Endothelial cell of umbilical vein (primary cell): ENCODE measurements at regions of chr11 and their contacts with region 1.

Region 1: GRCh38 chr11:68383976-68384501 is 71.6 kb downstream of the LRP5 start:
- DNase-seq: peak; percentile 41
- H3K4me3 ChIP-seq: no peak overlapping the region
- H3K27ac ChIP-seq: no peak overlapping the region
- H3K4me1 ChIP-seq: peaks cover 33% of the 10 kb centered on the region
- H3K27me3 ChIP-seq: no peaks in the 10 kb centered on the region
- CTCF ChIP-seq: peak; percentile 90 to 93
- POLR2A ChIP-seq: no peak

Region 2: GRCh38 chr11:68213555-68214174 is 170.4 kb before region 1 on chr11:
- CTCF ChIA-PET with region 1: interaction called, 8 read pairs
- POLR2A ChIA-PET with region 1: no interaction called
- dilution Hi-C with region 1: no loop called
- intact Hi-C with region 1: loop called (anchors 1 kb)
- DNase-seq: peak; percentile 87
- H3K4me3 ChIP-seq: peak overlapping the region; percentile 49 to 84 (median 75)
- H3K27ac ChIP-seq: peak overlapping the region; percentile 88
- H3K4me1 ChIP-seq: peaks cover 17% of the 10 kb centered on the region
- H3K27me3 ChIP-seq: peaks cover 0 to 6% of the 10 kb centered on the region in 2 experiments
- CTCF ChIP-seq: no peak
- POLR2A ChIP-seq: peak; percentile 99

Region 3: GRCh38 chr11:68257475-68258362 is 126.3 kb before region 1 on chr11:
- CTCF ChIA-PET with region 1: interaction called, 23 read pairs
- POLR2A ChIA-PET with region 1: no interaction called
- dilution Hi-C with region 1: no loop called
- intact Hi-C with region 1: loop called (anchors 1 kb)
- DNase-seq: peak; percentile 78
- H3K4me3 ChIP-seq: no peak overlapping the region
- H3K27ac ChIP-seq: no peak overlapping the region
- H3K4me1 ChIP-seq: peaks cover 2% of the 10 kb centered on the region
- H3K27me3 ChIP-seq: no peaks in the 10 kb centered on the region
- CTCF ChIP-seq: peak; percentile 69 to 87
- POLR2A ChIP-seq: no peak

Region 4: GRCh38 chr11:68271781-68272608 is 112.0 kb before region 1 on chr11 and contains the start of gene C11orf24:
- CTCF ChIA-PET with region 1: interaction called, 7 read pairs
- POLR2A ChIA-PET with region 1: no interaction called
- dilution Hi-C with region 1: no loop called
- intact Hi-C with region 1: loop called (anchors 1 kb)
- DNase-seq: peak; percentile 90
- H3K4me3 ChIP-seq: peak within 1 kb of the TSS; percentile 59 to 68 (median 60)
- H3K27ac ChIP-seq: peak within 1 kb of the TSS; percentile 71
- H3K4me1 ChIP-seq: peaks cover 7% of the 10 kb centered on the region
- H3K27me3 ChIP-seq: no peaks in the 10 kb centered on the region
- CTCF ChIP-seq: no peak
- POLR2A ChIP-seq: peak; percentile 77
- total RNA-seq, gene C11orf24: 26.4 and 28.4 TPM in 2 replicates

Region 5: DNA sequence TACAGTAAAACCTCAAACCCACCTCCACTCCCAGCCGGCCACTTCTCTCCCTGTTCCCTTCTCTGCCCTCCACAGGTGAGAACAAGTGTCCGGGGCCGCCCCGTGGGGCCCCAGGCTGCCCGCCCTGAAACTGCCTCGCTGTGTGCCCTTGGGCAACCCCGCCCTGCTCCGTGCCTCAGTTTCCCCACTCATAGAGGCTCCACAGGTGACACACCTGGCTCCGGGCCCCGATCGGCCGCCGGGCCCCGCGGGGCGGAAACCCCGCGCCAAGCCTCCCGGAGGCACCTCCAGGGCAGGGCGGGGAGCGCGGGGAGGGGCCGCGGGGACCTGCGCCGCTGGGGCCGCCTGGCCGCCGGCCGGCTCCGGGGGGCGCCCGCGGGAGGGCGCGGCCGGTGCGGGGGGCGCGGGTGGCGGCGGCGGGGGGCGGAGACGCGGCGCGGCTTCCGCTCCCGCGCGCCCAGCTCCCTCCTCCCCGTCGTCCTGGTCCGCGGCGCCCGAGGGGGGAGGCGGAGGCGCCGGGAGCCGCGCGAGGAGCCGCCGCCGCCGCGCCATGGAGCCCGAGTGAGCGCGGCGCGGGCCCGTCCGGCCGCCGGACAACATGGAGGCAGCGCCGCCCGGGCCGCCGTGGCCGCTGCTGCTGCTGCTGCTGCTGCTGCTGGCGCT is 71.8 kb before region 1 on chr11 and contains the start of gene LRP5:
- CTCF ChIA-PET with region 1: interaction called, 10 read pairs
- POLR2A ChIA-PET with region 1: interaction called, 4 read pairs
- dilution Hi-C with region 1: no loop called
- intact Hi-C with region 1: loop called (anchors 1 kb)
- DNase-seq: no peak
- H3K4me3 ChIP-seq: peak within 1 kb of the TSS; percentile 33 to 88 (median 78)
- H3K27ac ChIP-seq: peak within 1 kb of the TSS; percentile 69
- H3K4me1 ChIP-seq: peaks cover 25% of the 10 kb centered on the region
- H3K27me3 ChIP-seq: no peaks in the 10 kb centered on the region
- CTCF ChIP-seq: no peak
- POLR2A ChIP-seq: no peak
- total RNA-seq, gene LRP5: 44.3 and 51.8 TPM in 2 replicates

Region 6: DNA sequence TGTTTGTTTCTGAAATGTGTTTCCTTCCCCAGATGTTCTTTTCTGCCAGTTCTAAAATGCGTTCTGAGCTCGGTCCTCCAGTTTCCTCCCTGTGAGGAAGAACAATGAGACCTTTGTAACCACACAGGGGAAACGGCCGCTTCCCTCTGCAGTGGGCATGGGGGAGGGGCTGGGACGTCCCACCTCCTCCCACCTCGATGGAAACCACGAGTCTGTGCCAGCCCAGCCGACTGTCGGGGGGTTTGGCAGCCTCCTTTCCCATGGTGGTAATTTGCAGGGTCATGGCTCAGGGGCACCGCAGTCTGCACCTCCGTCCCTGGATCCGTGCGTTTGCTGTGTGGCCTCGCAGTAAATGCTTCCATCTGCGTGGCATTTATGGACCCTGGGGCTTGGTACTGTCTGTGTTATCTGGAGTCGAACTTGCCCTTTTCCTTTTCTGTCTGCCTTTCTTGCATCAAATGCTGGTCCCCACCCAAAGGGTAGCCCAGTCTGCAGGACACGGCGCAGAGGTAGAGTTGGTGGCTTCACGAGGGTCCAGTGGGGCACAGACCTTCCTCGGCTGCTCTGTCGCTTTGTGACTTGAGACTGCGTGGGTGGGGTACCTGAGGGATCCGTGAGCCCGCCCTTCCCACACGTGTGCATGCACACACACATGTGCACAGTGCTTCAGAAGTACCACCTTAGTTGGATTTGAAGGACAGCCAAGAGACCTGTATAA is 55.5 kb before region 1 on chr11:
- CTCF ChIA-PET with region 1: interaction called, 13 read pairs
- POLR2A ChIA-PET with region 1: interaction called, 5 read pairs
- dilution Hi-C with region 1: no loop called
- intact Hi-C with region 1: loop called (anchors 1 kb)
- DNase-seq: peak; percentile 84
- H3K4me3 ChIP-seq: no peak overlapping the region
- H3K27ac ChIP-seq: peak overlapping the region; percentile 35
- H3K4me1 ChIP-seq: peaks cover 53% of the 10 kb centered on the region
- H3K27me3 ChIP-seq: no peaks in the 10 kb centered on the region
- CTCF ChIP-seq: no peak
- POLR2A ChIP-seq: peak; percentile 57

Region 7: GRCh38 chr11:68436985-68437926 is 53.2 kb after region 1 on chr11:
- CTCF ChIA-PET with region 1: interaction called, 4 read pairs
- POLR2A ChIA-PET with region 1: no interaction called
- dilution Hi-C with region 1: no loop called
- intact Hi-C with region 1: loop called (anchors 5 kb)
- DNase-seq: peak; percentile 87
- H3K4me3 ChIP-seq: no peak overlapping the region
- H3K27ac ChIP-seq: peak overlapping the region; percentile 89
- H3K4me1 ChIP-seq: peaks cover 16% of the 10 kb centered on the region
- H3K27me3 ChIP-seq: no peaks in the 10 kb centered on the region
- CTCF ChIP-seq: peak; percentile 25 to 28
- POLR2A ChIP-seq: peak; percentile 58

Region 8: DNA sequence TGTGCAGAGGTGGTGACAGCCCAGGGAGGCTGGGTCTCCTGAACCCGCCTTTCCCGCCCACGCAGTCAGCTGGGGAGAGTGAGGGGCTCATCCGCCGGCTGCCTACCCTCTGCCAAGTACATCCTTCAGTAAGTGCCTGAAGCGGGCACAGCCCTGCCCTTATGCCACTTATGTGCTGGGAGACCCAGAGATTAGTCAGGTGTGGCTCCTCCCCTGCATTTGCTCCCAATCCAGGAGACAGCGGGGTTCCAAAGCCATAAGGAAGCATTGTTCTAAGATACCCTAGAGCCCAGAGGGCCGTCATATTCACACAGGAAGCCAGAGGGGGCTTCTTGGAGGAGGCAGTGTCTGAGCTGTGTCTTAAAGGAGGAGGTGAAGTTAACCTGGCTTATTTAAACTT is 70.7 kb after region 1 on chr11:
- CTCF ChIA-PET with region 1: no interaction called
- POLR2A ChIA-PET with region 1: no interaction called
- dilution Hi-C with region 1: no loop called
- intact Hi-C with region 1: no loop called
- DNase-seq: no peak
- H3K4me3 ChIP-seq: no peak overlapping the region
- H3K27ac ChIP-seq: no peak overlapping the region
- H3K4me1 ChIP-seq: no peaks in the 10 kb centered on the region
- H3K27me3 ChIP-seq: peaks cover 0 to 3% of the 10 kb centered on the region in 2 experiments
- CTCF ChIP-seq: no peak
- POLR2A ChIP-seq: no peak